ENCODE measurements at regions of chr15 and their contacts with region 1.

Region 1: GRCh38 chr15:77659350-77660321 is 26.9 kb upstream of the LINGO1 start:
- DNase-seq: peak; percentile 71
- H3K4me3 ChIP-seq: no peak overlapping the region
- H3K27ac ChIP-seq: no peak overlapping the region
- H3K4me1 ChIP-seq: no peaks in the 10 kb centered on the region
- CTCF ChIP-seq: peak; percentile 69

Region 2: DNA sequence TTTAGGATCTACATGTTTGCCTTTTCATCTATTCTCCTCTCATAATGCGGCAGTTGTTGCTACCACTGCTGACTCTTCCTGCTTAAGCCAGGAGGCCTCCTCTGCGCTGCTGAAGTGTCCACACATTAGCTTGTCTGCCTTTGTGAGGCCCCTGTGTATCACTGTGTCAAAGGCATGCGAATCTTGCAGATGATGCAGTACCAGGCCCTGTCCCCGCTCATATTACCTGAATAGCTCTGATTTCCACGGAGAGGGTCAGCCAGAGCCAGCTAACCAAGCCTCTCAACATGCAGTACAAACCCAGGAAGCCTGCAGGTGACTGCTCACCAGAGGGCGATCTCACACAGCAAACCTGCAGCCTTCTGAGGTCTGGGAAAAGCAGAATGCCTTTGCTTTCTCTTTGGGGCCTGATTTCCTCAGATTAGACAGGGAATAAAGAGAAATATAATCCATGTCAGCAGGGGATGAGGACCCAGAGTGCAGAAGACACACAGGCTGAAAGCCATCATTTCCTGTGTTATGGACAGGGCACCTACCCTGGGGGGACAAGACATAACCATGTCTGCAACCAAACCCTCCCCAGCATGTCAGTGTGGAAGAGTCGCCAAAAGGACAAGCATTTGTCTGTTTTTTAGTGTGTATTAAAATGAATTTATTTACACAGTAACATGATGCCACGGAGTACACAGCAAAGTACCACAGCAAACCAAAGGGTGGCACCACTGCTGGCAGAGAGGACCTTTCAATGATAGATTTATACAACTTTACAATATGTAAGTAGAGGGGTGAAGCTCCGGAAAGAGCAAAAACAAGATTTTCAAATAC is 551.9 kb before region 1 on chr15:
- CTCF ChIA-PET with region 1: interaction called, 10 read pairs
- POLR2A ChIA-PET with region 1: no interaction called
- intact Hi-C with region 1: no loop called
- DNase-seq: peak; percentile 57
- H3K4me3 ChIP-seq: no peak overlapping the region
- H3K27ac ChIP-seq: no peak overlapping the region
- H3K4me1 ChIP-seq: no peaks in the 10 kb centered on the region
- CTCF ChIP-seq: peak; percentile 86

Region 3: GRCh38 chr15:77387365-77388105 is 272.1 kb before region 1 on chr15:
- CTCF ChIA-PET with region 1: no interaction called
- POLR2A ChIA-PET with region 1: no interaction called
- intact Hi-C with region 1: no loop called
- DNase-seq: no peak
- H3K4me3 ChIP-seq: no peak overlapping the region
- H3K27ac ChIP-seq: no peak overlapping the region
- H3K4me1 ChIP-seq: no peaks in the 10 kb centered on the region
- CTCF ChIP-seq: no peak

Region 4: GRCh38 chr15:77821188-77821958 is 161.7 kb after region 1 on chr15:
- CTCF ChIA-PET with region 1: no interaction called
- POLR2A ChIA-PET with region 1: no interaction called
- intact Hi-C with region 1: loop called (anchors 1 kb)
- DNase-seq: peak; percentile 64
- H3K4me3 ChIP-seq: no peak overlapping the region
- H3K27ac ChIP-seq: no peak overlapping the region
- H3K4me1 ChIP-seq: no peaks in the 10 kb centered on the region
- CTCF ChIP-seq: peak; percentile 83